ENCODE measurements at regions of chr7 and their contacts with region 1.

Region 1: DNA sequence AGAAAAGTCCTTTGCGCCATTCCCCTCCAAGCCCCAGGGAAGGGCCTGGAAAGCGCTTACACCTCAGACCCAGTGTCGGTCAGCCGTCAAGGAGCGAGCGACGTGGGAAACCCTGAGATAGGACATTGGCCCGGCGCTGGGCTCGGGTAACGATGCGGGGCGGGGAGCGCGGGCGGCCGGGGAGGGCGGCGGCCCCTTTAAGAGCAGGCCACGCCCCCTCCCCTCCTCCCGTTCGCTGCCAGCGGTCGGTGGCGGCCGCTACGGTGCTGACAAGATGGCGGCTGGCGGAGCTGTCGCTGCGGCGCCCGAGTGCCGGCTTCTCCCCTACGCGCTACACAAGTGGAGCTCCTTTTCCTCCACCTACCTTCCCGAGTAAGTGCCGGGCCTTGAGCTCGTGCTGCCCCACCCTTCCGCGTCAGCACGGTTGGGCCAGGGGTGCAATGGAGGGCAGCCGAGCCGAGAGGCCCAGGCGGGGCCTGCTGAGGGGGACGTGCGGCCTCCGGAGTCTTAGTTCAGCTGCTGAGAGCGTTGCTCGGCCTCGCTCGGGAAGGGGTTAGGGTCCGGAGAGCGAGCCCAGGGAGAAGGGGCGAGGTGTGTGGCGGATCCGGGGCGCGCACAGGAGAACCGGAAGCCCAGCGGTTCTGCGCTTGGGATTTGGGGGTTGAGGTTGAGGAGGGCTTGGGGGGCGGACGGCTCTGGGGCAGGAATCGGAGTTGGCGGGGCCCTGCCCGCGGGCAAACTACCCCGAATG is at the start of gene MKLN1:
- DNase-seq: peak; percentile 85
- ATAC-seq: peak; percentile 96
- H3K4me3 Mint-ChIP-seq: peak within 1 kb of the TSS; percentile 98
- H3K27ac Mint-ChIP-seq: peak within 1 kb of the TSS; percentile 95
- H3K4me1 Mint-ChIP-seq: peaks cover 57% of the 10 kb centered on the region
- H3K27me3 Mint-ChIP-seq: no peaks in the 10 kb centered on the region
- CTCF ChIP-seq: no peak
- total RNA-seq, gene MKLN1: 48.9 and 64.6 TPM in 2 replicates

Region 2: GRCh38 chr7:131231381-131232220 is 96.2 kb before region 1 on chr7:
- CTCF ChIA-PET with region 1: no interaction called
- POLR2A ChIA-PET with region 1: interaction called, 3 read pairs
- intact Hi-C with region 1: loop called (anchors 1 kb)
- DNase-seq: peak; percentile 31
- ATAC-seq: peak; percentile 73
- H3K4me3 Mint-ChIP-seq: peak overlapping the region; percentile 82
- H3K27ac Mint-ChIP-seq: peak overlapping the region; percentile 97
- H3K4me1 Mint-ChIP-seq: peaks cover 29% of the 10 kb centered on the region
- H3K27me3 Mint-ChIP-seq: no peaks in the 10 kb centered on the region
- CTCF ChIP-seq: no peak

Region 3: DNA sequence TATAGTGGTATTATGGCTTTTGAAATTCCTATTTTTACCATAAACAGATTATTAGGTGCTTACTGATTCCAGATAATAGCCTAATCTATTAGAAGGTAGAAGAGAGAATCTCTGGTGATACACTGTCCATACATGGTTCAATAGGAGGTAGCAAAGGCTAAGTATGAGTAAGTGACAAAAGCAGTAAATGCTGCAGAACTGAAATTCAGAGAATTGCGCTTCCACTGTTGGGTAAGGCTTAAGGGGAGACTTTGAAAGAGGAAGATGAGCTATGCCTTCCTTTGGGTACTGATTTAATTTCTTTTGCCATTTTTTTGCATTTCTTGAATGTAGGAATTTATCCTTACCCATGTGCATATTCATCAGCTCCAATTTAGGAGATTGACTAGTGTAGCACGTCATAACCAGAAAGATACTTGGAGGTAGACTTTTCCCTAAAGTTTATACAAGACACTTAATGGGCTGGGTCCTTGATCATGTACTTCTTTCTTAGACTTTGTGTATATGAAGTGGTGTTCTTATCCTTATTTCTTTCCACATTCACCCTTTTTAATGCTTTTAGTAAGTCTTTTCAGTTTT is 15.2 kb after region 1 on chr7:
- CTCF ChIA-PET with region 1: interaction called, 4 read pairs
- POLR2A ChIA-PET with region 1: interaction called, 16 read pairs
- intact Hi-C with region 1: loop called (anchors 2 kb)
- DNase-seq: no peak
- ATAC-seq: no peak
- H3K4me3 Mint-ChIP-seq: no peak overlapping the region
- H3K27ac Mint-ChIP-seq: no peak overlapping the region
- H3K4me1 Mint-ChIP-seq: peaks cover 44% of the 10 kb centered on the region
- H3K27me3 Mint-ChIP-seq: no peaks in the 10 kb centered on the region
- CTCF ChIP-seq: no peak

Region 4: GRCh38 chr7:131431289-131431688 is 103.5 kb after region 1 on chr7:
- CTCF ChIA-PET with region 1: no interaction called
- POLR2A ChIA-PET with region 1: no interaction called
- intact Hi-C with region 1: no loop called
- DNase-seq: no peak
- ATAC-seq: no peak
- H3K4me3 Mint-ChIP-seq: no peak overlapping the region
- H3K27ac Mint-ChIP-seq: no peak overlapping the region
- H3K4me1 Mint-ChIP-seq: no peaks in the 10 kb centered on the region
- H3K27me3 Mint-ChIP-seq: no peaks in the 10 kb centered on the region
- CTCF ChIP-seq: no peak

Measured in activated B cell treated with CpG ODN at 0.5 μM for 24 hours (primary cell).